Heart left ventricle (tissue), 16 donors: ENCODE measurements at regions of chr10 and their contacts with region 1.

Region 1: GRCh38 chr10:118800920-118801319 is 46.1 kb upstream of the CACUL1 start:
- DNase-seq: peak in 2 of 5 donors; percentile 23 to 40
- ATAC-seq: peak in 3 of 4 donors; percentile 77 to 84 (median 81)
- H3K4me3 ChIP-seq: no peak overlapping the region
- H3K27ac ChIP-seq: no peak overlapping the region
- H3K4me1 ChIP-seq: peaks cover 0 to 5% (median 0%) of the 10 kb centered on the region in 12 donors
- H3K27me3 ChIP-seq: peaks cover 0 to 6% (median 0%) of the 10 kb centered on the region in 9 donors
- CTCF ChIP-seq: peak; percentile 18 to 63 (median 42)
- POLR2A ChIP-seq: no peak

Region 2: DNA sequence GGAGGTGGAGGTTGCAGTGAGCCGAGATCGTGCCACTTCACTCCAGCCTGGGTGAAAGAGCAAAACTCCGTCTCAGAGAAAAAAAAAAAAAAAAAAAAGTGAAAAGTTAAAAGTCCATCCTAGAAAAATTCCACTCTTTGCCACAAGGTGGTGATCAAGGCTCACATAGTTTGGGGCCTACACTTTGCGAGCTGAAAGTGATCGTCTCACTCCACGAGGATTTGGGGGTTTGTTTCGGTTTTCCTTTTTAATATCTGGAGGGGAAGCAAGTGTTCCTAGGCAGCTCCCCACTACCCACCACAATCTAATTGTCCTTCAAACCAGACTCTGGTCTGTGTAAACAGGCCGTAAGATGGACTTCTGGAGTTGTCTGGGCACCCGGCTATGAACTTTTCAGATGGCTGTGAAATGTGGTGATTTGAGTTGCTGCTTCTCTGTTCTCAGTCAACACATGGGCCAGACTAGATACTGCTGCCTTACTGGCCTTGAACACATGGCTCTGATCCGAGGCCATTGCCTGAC is 232.5 kb before region 1 on chr10:
- intact Hi-C with region 1: loop called (anchors 2 to 10 kb)
- DNase-seq: peak in 2 of 5 donors; percentile 48 to 54
- ATAC-seq: peak in 3 of 4 donors; percentile 35 to 73 (median 58)
- H3K4me3 ChIP-seq: peak overlapping the region in 2 of 12 donors; percentile 21 to 22
- H3K27ac ChIP-seq: no peak overlapping the region
- H3K4me1 ChIP-seq: peaks cover 0 to 23% (median 9%) of the 10 kb centered on the region in 12 donors
- H3K27me3 ChIP-seq: peaks cover 0 to 5% (median 0%) of the 10 kb centered on the region in 9 donors
- CTCF ChIP-seq: peak; percentile 64 to 82 (median 78)
- POLR2A ChIP-seq: no peak

Region 3: DNA sequence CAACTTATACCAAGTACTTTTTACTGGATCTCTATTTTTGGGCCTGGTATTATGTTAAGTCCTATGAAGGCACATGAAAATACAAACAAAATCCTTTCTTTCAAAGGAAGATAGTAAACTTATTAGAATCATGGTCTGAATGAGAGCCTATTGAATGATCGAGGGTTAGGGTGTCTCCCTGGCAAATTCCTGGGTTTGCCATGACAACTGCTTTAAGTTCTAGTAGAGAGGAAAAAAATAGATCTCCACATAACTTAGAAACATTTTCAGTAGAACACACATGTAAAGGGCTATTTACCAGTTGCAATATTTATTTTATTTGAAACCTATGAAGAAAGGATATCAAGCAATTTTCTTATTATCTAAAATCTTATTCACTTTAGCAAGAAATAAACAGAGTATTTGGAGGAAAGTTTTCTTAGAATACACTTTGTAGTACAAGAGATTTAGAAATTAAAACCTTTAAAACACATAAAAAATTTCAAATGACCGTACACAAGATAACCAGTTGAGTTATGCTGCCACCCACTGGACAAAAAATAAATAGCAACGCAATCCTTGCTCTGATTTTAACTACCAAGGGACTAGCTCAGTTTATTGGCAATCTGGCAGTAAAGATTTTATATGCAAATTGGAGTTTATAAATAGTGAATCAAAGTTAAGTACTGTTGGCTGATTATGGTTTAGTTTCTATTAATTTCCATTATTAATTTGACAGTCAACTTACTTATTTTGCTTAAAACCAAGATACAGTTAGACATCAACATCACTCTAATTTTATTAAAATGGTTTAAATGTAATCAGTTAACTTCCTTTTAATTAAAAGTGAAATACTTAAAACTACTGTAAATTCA is 80.0 kb before region 1 on chr10:
- intact Hi-C with region 1: loop called in 1 of 10 experiments (anchors 10 kb)
- DNase-seq: peak in 2 of 5 donors; percentile 28 to 36
- ATAC-seq: no peak
- H3K4me3 ChIP-seq: no peak overlapping the region
- H3K27ac ChIP-seq: no peak overlapping the region
- H3K4me1 ChIP-seq: peaks cover 0 to 29% (median 13%) of the 10 kb centered on the region in 12 donors
- H3K27me3 ChIP-seq: no peaks in the 10 kb centered on the region
- CTCF ChIP-seq: peak; percentile 72 to 91 (median 86)
- POLR2A ChIP-seq: no peak

Region 4: GRCh38 chr10:118754720-118755480 is 46.0 kb before region 1 on chr10 and contains the start of gene CACUL1:
- intact Hi-C with region 1: loop called in 1 of 10 experiments (anchors 2 kb)
- DNase-seq: peak; percentile 100
- ATAC-seq: peak; percentile 99 to 100 (median 99)
- H3K4me3 ChIP-seq: peak within 1 kb of the TSS; percentile 78 to 100 (median 94)
- H3K27ac ChIP-seq: peak within 1 kb of the TSS; percentile 25 to 93 (median 84)
- H3K4me1 ChIP-seq: peaks cover 4 to 40% (median 25%) of the 10 kb centered on the region in 12 donors
- H3K27me3 ChIP-seq: no peaks in the 10 kb centered on the region
- CTCF ChIP-seq: peak in 2 of 12 donors; percentile 9 to 11
- POLR2A ChIP-seq: peak in 1 of 2 donors; percentile 56
- total RNA-seq, gene CACUL1: 18.8 to 38.7 (median 24.8) TPM